ENCODE measurements at regions of chr10 and their contacts with region 1.

Region 1: GRCh38 chr10:63720072-63720537 is 198.9 kb downstream of the REEP3 start:
- DNase-seq: peak in 33 of 42 donors; percentile 19 to 86 (median 59)

Region 2: DNA sequence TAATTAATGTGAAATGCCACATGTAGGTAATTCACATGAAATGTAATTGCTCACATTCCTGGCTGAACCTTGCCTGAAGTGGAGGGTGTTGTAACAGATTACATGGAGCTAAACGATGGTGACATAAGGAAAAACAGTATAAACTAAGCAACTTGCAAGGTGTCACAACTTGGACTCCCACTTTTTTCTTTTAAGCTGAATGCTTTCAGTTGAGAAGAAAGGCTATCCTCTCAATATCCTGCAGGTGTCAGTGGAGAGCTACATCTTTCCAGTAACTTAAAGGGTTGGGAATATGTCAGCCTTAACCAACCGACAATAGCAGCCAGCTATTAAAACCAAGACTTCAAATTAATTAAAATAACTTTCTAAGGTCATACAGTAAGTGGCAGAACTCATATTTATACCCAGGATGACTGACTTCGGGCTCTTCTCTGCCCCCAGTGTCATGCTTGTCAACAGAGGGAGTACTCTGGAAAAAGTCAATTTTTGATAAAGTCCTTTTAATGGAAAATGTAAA is 553.3 kb before region 1 on chr10:
- intact Hi-C with region 1: loop called (anchors 5 kb)
- DNase-seq: peak in 15 of 42 donors; percentile 22 to 78 (median 51)